OCI-LY7 (cell line): ENCODE measurements at regions of chr12 and their contacts with region 1.

Region 1: GRCh38 chr12:19186722-19187661 is 57.5 kb downstream of the PLEKHA5 start:
- DNase-seq: peak; percentile 52
- H3K4me3 ChIP-seq: no peak overlapping the region
- H3K27ac ChIP-seq: no peak overlapping the region
- H3K4me1 ChIP-seq: no peaks in the 10 kb centered on the region
- CTCF ChIP-seq: peak; percentile 84

Region 2: DNA sequence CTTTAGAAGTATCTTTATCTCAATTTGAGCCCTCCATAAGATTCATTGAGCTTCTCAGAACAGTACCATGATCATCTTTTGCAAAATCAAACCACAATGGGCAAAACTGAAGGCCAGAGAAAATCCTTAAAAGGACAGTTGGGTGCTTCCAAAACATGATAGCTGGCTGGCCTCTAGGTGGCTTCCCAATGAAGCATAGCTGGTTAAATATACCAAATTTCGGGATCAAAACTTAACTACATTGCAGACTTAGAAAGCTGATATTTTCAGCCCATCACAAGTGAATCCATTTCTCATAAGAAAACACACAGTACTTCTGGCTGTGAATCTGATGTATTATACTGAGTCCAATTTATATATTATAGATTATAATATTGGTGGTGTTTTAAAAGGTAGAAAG is 940.9 kb before region 1 on chr12:
- CTCF ChIA-PET with region 1: no interaction called
- POLR2A ChIA-PET with region 1: no interaction called
- intact Hi-C with region 1: loop called (anchors 10 kb)
- DNase-seq: no peak
- H3K4me3 ChIP-seq: no peak overlapping the region
- H3K27ac ChIP-seq: no peak overlapping the region
- H3K4me1 ChIP-seq: no peaks in the 10 kb centered on the region
- CTCF ChIP-seq: peak; percentile 35; the same call in 1 of the 2 replicates

Region 3: GRCh38 chr12:18861287-18861858 is 325.6 kb before region 1 on chr12:
- CTCF ChIA-PET with region 1: no interaction called
- POLR2A ChIA-PET with region 1: no interaction called
- intact Hi-C with region 1: loop called (anchors 5 kb)
- DNase-seq: peak; percentile 21
- H3K4me3 ChIP-seq: no peak overlapping the region
- H3K27ac ChIP-seq: no peak overlapping the region
- H3K4me1 ChIP-seq: no peaks in the 10 kb centered on the region
- CTCF ChIP-seq: peak; percentile 81